Activated B cell treated with CpG ODN at 0.5 μM for 24 hours (primary cell): ENCODE measurements at regions of chr6 and their contacts with region 1.

Region 1: DNA sequence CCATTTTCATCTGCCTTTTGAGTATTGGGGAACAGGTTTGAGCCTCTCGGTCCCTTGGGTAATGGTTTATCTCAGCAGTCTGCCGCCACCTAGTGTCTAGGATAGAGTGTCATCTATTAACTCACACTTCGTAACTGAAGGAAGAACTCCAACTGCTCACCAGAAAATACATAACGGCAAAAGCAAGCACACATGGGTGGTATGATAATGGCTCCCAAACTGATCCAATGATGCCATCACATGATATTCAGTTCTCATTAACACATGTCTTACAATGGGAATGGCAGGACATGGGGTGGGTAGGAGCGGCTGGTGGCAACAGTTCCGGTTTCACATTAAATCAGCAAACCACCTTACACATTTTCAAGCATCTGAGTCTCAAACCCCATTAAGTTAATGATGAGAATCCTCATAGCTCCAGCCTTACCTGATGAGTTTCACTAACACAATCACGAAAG is 110.7 kb upstream of the PHACTR1 start:
- DNase-seq: no peak
- ATAC-seq: peak; percentile 77
- H3K4me3 Mint-ChIP-seq: peak overlapping the region; percentile 61
- H3K27ac Mint-ChIP-seq: no peak overlapping the region
- H3K4me1 Mint-ChIP-seq: peaks cover 31% of the 10 kb centered on the region
- H3K27me3 Mint-ChIP-seq: peaks cover 3% of the 10 kb centered on the region
- CTCF ChIP-seq: no peak

Region 2: GRCh38 chr6:11585426-11586016 is 1020.4 kb before region 1 on chr6:
- CTCF ChIA-PET with region 1: interaction called, 5 read pairs
- POLR2A ChIA-PET with region 1: no interaction called
- intact Hi-C with region 1: loop called (anchors 5 kb)
- DNase-seq: no peak
- ATAC-seq: no peak
- H3K4me3 Mint-ChIP-seq: no peak overlapping the region
- H3K27ac Mint-ChIP-seq: no peak overlapping the region
- H3K4me1 Mint-ChIP-seq: no peaks in the 10 kb centered on the region
- H3K27me3 Mint-ChIP-seq: peaks cover 11% of the 10 kb centered on the region
- CTCF ChIP-seq: no peak

Region 3: GRCh38 chr6:11700118-11700718 is 905.7 kb before region 1 on chr6:
- CTCF ChIA-PET with region 1: interaction called, 3 read pairs
- POLR2A ChIA-PET with region 1: no interaction called
- intact Hi-C with region 1: loop called (anchors 5 kb)
- DNase-seq: no peak
- ATAC-seq: no peak
- H3K4me3 Mint-ChIP-seq: no peak overlapping the region
- H3K27ac Mint-ChIP-seq: no peak overlapping the region
- H3K4me1 Mint-ChIP-seq: no peaks in the 10 kb centered on the region
- H3K27me3 Mint-ChIP-seq: no peaks in the 10 kb centered on the region
- CTCF ChIP-seq: no peak

Region 4: DNA sequence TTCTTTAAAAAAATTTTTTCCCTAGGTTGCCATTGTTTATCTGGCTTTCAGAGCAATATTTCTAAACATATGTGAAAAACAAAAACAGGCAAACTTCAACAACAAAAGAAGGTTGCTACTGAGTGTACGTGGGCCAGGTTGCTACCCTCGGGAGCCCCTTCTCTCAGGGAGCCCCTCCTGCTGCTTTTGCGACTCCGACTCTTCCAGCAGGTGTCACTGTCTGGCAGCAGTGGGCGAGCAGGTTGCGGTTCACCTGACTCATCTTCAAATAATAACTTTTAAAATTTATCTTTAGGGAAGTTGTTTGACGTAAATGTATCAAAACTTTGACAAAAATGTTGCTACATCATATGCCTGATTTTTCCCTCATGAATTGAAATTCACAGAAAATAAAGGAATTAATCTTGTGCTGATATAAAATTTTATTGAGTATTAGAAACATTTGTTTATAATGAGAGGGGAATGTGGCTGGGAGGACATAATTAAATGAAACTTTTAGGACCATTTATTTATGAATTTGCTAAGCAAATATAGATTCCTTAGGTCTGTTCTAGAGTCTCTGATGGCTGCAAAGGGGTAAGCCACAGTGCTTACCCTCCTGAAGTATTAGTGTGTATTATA is 455.0 kb before region 1 on chr6:
- CTCF ChIA-PET with region 1: no interaction called
- POLR2A ChIA-PET with region 1: no interaction called
- intact Hi-C with region 1: loop called (anchors 2 kb)
- DNase-seq: no peak
- ATAC-seq: no peak
- H3K4me3 Mint-ChIP-seq: no peak overlapping the region
- H3K27ac Mint-ChIP-seq: no peak overlapping the region
- H3K4me1 Mint-ChIP-seq: peaks cover 16% of the 10 kb centered on the region
- H3K27me3 Mint-ChIP-seq: no peaks in the 10 kb centered on the region
- CTCF ChIP-seq: no peak

Region 5: GRCh38 chr6:12289933-12290820 is 315.7 kb before region 1 on chr6 and contains the start of gene EDN1:
- CTCF ChIA-PET with region 1: interaction called, 11 read pairs
- POLR2A ChIA-PET with region 1: no interaction called
- intact Hi-C with region 1: loop called (anchors 1 kb)
- DNase-seq: peak; percentile 44
- ATAC-seq: peak; percentile 84
- H3K4me3 Mint-ChIP-seq: peak within 1 kb of the TSS; percentile 86
- H3K27ac Mint-ChIP-seq: no peak within 1 kb of the TSS
- H3K4me1 Mint-ChIP-seq: peaks cover 15% of the 10 kb centered on the region
- H3K27me3 Mint-ChIP-seq: peaks cover 36% of the 10 kb centered on the region
- CTCF ChIP-seq: no peak
- total RNA-seq, gene EDN1: 0.56 and 0.91 TPM in 2 replicates

Region 6: DNA sequence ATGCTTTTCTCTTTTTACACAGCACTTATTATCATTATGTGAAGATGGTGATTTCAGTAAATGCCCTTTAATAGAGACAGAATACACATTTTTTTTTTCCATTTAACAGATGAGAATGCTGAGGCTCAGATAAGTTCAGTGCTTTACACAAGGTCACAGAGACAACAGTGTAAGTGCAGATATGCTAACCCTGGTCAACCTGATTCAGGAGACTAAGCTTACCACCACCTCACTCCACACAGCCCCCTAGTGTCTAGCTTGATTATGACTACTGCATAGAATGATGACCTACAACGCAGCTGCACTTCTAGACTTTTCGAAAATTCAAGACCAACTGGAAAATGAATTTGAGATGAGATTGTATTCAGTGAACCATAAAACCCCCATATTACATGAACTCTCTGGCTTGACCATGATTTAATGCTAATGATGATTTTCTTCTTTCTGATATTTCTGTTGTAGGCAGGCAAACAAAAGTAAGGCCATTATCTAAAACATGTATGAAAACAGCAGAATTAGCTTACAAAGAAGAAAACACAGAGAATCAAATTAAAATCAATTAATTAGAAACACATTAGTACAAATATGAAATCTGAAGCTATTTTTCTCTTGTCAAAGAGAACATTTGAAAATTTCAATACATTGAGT is 101.5 kb before region 1 on chr6:
- CTCF ChIA-PET with region 1: no interaction called
- POLR2A ChIA-PET with region 1: no interaction called
- intact Hi-C with region 1: loop called (anchors 10 kb)
- DNase-seq: no peak
- ATAC-seq: peak; percentile 67
- H3K4me3 Mint-ChIP-seq: no peak overlapping the region
- H3K27ac Mint-ChIP-seq: no peak overlapping the region
- H3K4me1 Mint-ChIP-seq: no peaks in the 10 kb centered on the region
- H3K27me3 Mint-ChIP-seq: peaks cover 3% of the 10 kb centered on the region
- CTCF ChIP-seq: no peak

Region 7: GRCh38 chr6:12621754-12622153 is 15.8 kb after region 1 on chr6:
- CTCF ChIA-PET with region 1: no interaction called
- POLR2A ChIA-PET with region 1: no interaction called
- intact Hi-C with region 1: no loop called
- DNase-seq: no peak
- ATAC-seq: peak; percentile 31
- H3K4me3 Mint-ChIP-seq: no peak overlapping the region
- H3K27ac Mint-ChIP-seq: no peak overlapping the region
- H3K4me1 Mint-ChIP-seq: peaks cover 21% of the 10 kb centered on the region
- H3K27me3 Mint-ChIP-seq: peaks cover 3% of the 10 kb centered on the region
- CTCF ChIP-seq: no peak